ENCODE measurements at regions of chr1 and their contacts with region 1.

Region 1: DNA sequence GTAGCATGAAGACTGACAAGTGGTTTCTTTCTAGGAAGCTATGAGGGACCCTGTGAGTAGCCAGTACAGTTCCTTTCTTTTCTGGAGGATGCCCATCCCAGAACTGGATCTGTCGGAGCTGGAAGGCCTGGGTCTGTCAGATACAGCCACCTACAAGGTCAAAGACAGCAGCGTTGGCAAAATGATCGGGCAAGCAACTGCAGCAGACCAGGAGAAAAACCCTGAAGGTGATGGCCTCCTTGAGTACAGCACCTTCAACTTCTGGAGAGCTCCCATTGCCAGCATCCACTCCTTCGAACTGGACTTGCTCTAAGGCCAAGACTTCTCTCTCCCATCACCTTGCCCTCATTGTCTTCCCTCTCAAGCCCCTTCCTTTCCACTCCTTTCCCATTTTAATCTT is 3.4 kb upstream of the GABPB2 start:
- DNase-seq: no peak
- H3K4me3 ChIP-seq: no peak overlapping the region
- H3K27ac ChIP-seq: no peak overlapping the region
- H3K4me1 ChIP-seq: peaks cover 2% of the 10 kb centered on the region
- H3K27me3 ChIP-seq: no peaks in the 10 kb centered on the region
- CTCF ChIP-seq: no peak
- POLR2A ChIP-seq: no peak

Region 2: DNA sequence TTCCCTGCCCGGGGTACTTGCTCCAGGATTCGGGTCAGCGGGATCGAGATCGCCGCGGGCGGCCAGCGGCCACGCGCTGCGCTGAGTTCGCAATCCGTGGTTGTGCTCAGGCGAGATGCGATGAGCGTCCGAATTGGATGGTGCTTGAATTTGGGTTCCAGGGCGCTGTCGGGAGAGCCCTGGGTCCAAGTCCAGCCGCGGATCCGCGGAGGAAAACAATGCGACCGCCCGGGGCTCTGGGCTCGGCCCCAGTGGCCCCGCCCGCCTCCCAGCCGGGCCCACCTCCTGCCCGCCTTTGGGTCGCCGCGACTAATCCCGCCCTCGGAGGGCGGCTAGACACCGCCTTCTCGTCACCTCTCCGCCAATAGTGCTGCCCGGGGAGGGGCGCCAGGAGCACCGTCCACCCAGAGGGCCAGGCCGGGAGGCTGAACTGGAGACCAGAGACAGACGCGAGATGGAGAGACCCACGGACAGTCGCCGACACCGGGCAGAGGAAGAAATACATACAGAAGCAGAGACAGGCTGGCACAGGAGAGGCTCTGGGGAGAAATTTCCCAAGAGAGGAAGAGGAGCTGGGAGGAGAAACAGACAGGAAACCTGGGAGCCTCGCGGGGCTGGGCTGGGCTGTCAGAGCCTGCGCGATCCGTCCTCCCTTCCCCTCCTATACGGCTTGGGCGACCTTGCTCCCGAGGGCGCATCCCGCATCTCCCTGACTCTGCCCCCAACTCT is 79.4 kb after region 1 on chr1 and contains the start of gene SEMA6C:
- intact Hi-C with region 1: loop called (anchors 5 kb)
- DNase-seq: peak; percentile 94
- H3K4me3 ChIP-seq: peak within 1 kb of the TSS; percentile 62 to 75
- H3K27ac ChIP-seq: peak within 1 kb of the TSS; percentile 59 to 68
- H3K4me1 ChIP-seq: no peaks in the 10 kb centered on the region
- H3K27me3 ChIP-seq: no peaks in the 10 kb centered on the region
- CTCF ChIP-seq: peak in 1 of 4 experiments; percentile 22
- POLR2A ChIP-seq: peak; percentile 90
- total RNA-seq, gene SEMA6C: 4.1 to 173 TPM